Dendritic cell treated with granulocyte-macrophage colony-stimulating factor and Interleukin-4, amounts not matched to agents 40 ng/mL and 50 ng/mL, for 4 days (primary cell): ENCODE measurements at regions of chr21 and their contacts with region 1.

Region 1: GRCh38 chr21:34113842-34114241 is 40.5 kb downstream of the MRPS6 start:
- H3K4me3 Mint-ChIP-seq: no peak overlapping the region
- H3K27ac Mint-ChIP-seq: peak overlapping the region; percentile 35
- H3K4me1 Mint-ChIP-seq: peaks cover 51% of the 10 kb centered on the region
- H3K27me3 Mint-ChIP-seq: no peaks in the 10 kb centered on the region

Region 2: GRCh38 chr21:34157521-34157920 is 43.7 kb after region 1 on chr21:
- intact Hi-C with region 1: no loop called
- H3K4me3 Mint-ChIP-seq: no peak overlapping the region
- H3K27ac Mint-ChIP-seq: no peak overlapping the region
- H3K4me1 Mint-ChIP-seq: no peaks in the 10 kb centered on the region
- H3K27me3 Mint-ChIP-seq: no peaks in the 10 kb centered on the region

Region 3: DNA sequence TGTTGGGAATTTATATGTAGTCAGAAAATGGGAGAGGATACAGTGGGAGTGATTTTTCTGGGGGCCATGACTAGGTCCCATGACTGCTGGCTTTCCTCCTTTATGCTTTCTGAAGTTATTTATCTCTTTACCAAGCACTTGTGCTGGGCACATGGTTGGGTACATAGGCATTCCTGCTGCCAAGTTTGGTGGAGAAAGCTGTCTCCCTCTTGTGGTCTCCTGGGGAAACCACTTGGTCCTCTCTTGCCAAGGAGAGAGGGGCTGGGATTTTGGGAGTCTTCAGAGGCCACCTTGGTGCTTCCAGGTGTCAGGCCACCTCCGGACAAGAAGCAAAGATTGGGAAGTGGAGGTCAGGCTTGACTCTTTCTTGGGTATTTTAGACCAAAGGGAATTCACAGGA is 129.7 kb after region 1 on chr21:
- intact Hi-C with region 1: loop called (anchors 10 kb)
- H3K4me3 Mint-ChIP-seq: no peak overlapping the region
- H3K27ac Mint-ChIP-seq: no peak overlapping the region
- H3K4me1 Mint-ChIP-seq: peaks cover 5% of the 10 kb centered on the region
- H3K27me3 Mint-ChIP-seq: peaks cover 9% of the 10 kb centered on the region